Caco-2 (cell line): ENCODE measurements at regions of chr16 and their contacts with region 1.

Region 1: GRCh38 chr16:19086322-19087199 is 19.1 kb downstream of the COQ7 start:
- DNase-seq: peak; percentile 93 to 96
- H3K4me3 ChIP-seq: peak overlapping the region; percentile 41
- H3K4me3 Mint-ChIP-seq: peak overlapping the region; percentile 85
- H3K27ac Mint-ChIP-seq: peak overlapping the region; percentile 86
- H3K4me1 ChIP-seq: 0 out of 2 replicates have a peak, but pooled peaks cover 10% of the 10 kb centered on the region
- H3K4me1 Mint-ChIP-seq: no peaks in the 10 kb centered on the region
- H3K27me3 ChIP-seq: no peaks in the 10 kb centered on the region
- H3K27me3 Mint-ChIP-seq: no peaks in the 10 kb centered on the region
- CTCF ChIP-seq: peak; percentile 92 to 95

Region 2: DNA sequence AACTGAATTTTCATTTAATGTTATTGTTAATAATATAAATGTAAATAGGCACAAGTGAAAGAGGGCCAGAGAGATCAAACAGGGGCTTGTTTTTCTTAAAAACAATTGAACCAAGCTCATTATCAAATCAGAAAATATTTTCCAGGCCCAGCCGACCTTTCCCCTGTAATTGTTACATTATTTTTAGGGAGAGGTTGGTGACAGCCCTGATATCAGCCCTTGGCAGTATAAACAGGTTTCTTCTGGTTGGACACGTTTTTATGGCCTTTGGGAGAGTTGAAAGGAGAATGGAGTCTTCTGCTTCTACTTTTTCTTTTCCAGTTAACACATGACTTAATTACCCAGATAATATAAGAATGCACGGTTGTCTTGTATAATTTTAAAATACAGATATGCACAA is 59.1 kb before region 1 on chr16:
- CTCF ChIA-PET with region 1: no interaction called
- POLR2A ChIA-PET with region 1: no interaction called
- intact Hi-C with region 1: no loop called
- DNase-seq: no peak
- H3K4me3 ChIP-seq: no peak overlapping the region
- H3K4me3 Mint-ChIP-seq: no peak overlapping the region
- H3K27ac Mint-ChIP-seq: no peak overlapping the region
- H3K4me1 ChIP-seq: no peaks in the 10 kb centered on the region
- H3K4me1 Mint-ChIP-seq: no peaks in the 10 kb centered on the region
- H3K27me3 ChIP-seq: no peaks in the 10 kb centered on the region
- H3K27me3 Mint-ChIP-seq: no peaks in the 10 kb centered on the region
- CTCF ChIP-seq: no peak

Region 3: DNA sequence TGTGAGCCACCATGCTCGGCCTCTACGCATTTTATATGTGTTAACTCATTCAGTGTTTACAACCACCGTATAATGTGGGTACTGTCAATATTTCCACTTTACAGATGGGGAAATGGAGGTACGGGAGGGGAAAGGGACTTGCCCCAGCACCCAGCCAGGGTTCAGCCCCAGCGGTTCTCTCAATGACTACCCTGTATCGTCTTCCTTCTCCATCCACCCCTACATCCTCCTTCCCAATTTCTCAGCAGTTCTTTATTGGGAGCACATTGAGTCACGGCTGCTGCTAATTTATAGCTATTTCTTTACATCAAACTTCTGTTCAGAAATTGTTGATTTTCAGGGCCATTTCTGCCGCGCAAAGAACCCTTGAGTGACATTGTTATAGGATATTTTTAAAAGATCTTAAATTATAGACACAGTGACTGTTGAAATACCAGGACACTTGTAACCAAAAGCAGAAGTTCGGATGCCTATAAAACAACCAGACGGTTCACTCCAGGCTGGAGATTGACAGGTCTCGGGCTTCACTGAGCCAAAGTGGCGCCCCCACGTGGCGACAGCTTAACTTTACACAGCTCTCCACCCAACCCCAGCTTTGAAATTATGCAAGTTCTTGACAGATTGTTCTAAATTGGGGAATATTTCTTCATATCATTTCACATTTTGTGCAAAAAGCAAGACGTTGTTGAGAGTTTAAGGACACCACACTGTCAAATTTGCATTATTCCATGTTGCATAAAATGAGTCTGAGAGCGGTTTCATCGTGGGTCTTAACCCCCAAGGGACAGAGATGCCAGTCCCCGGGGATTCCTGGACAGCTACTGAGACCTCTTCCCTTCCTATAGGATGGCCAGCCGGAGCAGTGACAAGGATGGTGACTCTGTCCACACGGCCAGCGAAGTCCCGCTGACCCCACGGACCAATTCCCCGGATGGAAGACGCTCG is 93.3 kb after region 1 on chr16:
- CTCF ChIA-PET with region 1: interaction called, 9 read pairs
- POLR2A ChIA-PET with region 1: no interaction called
- intact Hi-C with region 1: loop called (anchors 1 kb)
- DNase-seq: peak; percentile 51 to 66
- H3K4me3 ChIP-seq: no peak overlapping the region
- H3K4me3 Mint-ChIP-seq: no peak overlapping the region
- H3K27ac Mint-ChIP-seq: no peak overlapping the region
- H3K4me1 ChIP-seq: no peaks in the 10 kb centered on the region
- H3K4me1 Mint-ChIP-seq: no peaks in the 10 kb centered on the region
- H3K27me3 ChIP-seq: no peaks in the 10 kb centered on the region
- H3K27me3 Mint-ChIP-seq: no peaks in the 10 kb centered on the region
- CTCF ChIP-seq: peak; percentile 61 to 72

Region 4: GRCh38 chr16:19196871-19197270 is 110.3 kb after region 1 on chr16:
- CTCF ChIA-PET with region 1: no interaction called
- POLR2A ChIA-PET with region 1: no interaction called
- intact Hi-C with region 1: no loop called
- DNase-seq: no peak
- H3K4me3 ChIP-seq: no peak overlapping the region
- H3K4me3 Mint-ChIP-seq: no peak overlapping the region
- H3K27ac Mint-ChIP-seq: no peak overlapping the region
- H3K4me1 ChIP-seq: no peaks in the 10 kb centered on the region
- H3K4me1 Mint-ChIP-seq: no peaks in the 10 kb centered on the region
- H3K27me3 ChIP-seq: no peaks in the 10 kb centered on the region
- H3K27me3 Mint-ChIP-seq: no peaks in the 10 kb centered on the region
- CTCF ChIP-seq: no peak

Region 5: DNA sequence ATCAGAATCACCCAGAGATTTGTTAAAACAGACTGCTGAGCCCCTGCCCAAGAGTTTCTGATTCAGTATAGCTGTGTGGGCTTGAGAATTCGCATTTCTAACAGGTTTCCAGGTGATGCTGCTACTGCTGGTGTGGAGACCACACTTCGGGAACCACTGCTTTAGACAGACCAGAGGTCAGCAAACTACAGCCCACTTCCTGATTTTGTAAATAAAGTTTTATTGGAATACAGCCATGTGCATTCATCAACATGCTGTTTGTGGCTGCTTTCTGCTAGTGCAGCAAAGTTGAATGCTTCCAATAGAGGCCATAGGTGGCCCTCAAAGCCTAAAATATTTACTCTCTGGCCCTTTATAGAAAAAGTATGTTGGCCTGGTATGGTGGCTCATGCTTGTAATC is 166.3 kb after region 1 on chr16:
- CTCF ChIA-PET with region 1: no interaction called
- POLR2A ChIA-PET with region 1: no interaction called
- intact Hi-C with region 1: no loop called
- DNase-seq: no peak
- H3K4me3 ChIP-seq: no peak overlapping the region
- H3K4me3 Mint-ChIP-seq: no peak overlapping the region
- H3K27ac Mint-ChIP-seq: no peak overlapping the region
- H3K4me1 ChIP-seq: no peaks in the 10 kb centered on the region
- H3K4me1 Mint-ChIP-seq: no peaks in the 10 kb centered on the region
- H3K27me3 ChIP-seq: no peaks in the 10 kb centered on the region
- H3K27me3 Mint-ChIP-seq: peaks cover 5% of the 10 kb centered on the region
- CTCF ChIP-seq: no peak

Region 6: GRCh38 chr16:19375561-19376158 is 289.1 kb after region 1 on chr16:
- CTCF ChIA-PET with region 1: interaction called, 8 read pairs
- POLR2A ChIA-PET with region 1: no interaction called
- intact Hi-C with region 1: loop called (anchors 1 kb)
- DNase-seq: peak; percentile 40 to 46
- H3K4me3 ChIP-seq: no peak overlapping the region
- H3K4me3 Mint-ChIP-seq: no peak overlapping the region
- H3K27ac Mint-ChIP-seq: no peak overlapping the region
- H3K4me1 ChIP-seq: peaks cover 4% of the 10 kb centered on the region; the same call in 1 of the 2 replicates
- H3K4me1 Mint-ChIP-seq: peaks cover 8% of the 10 kb centered on the region
- H3K27me3 ChIP-seq: no peaks in the 10 kb centered on the region
- H3K27me3 Mint-ChIP-seq: no peaks in the 10 kb centered on the region
- CTCF ChIP-seq: peak; percentile 78 to 83

Region 7: DNA sequence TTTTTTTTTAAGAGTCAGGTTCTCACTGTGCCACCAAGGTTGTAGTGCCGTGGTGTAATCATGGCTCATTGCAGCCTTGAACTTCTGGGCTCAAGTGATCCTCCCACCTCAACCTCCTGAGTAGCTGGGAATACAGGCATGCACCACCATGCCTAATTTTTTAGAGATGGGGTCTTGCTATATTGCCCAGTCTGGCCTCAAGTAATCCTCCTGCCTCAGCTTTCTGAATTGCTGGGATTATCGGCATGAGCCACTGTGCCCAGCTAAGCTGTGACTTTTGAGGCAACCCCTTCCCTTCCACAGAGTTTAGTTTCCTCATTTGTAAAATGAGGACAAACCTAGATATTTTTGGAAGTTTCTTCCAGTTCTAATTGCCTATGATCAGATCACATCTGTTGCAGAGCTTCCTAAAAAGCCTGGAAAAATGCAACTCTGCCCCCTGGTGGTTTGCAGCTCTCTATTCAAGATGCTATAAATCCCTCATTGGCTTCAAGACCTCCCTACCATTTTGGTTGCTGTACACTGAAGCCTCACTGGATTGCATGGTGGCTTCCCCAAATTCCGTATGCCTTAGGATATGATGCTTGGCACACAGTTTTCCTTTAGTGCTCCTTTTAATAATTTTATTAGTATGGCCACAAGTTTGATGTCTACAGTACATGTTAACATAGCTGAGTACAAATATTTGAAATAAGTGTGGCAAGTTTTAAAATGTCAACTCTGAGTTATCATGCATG is 416.0 kb after region 1 on chr16:
- CTCF ChIA-PET with region 1: interaction called, 3 read pairs
- POLR2A ChIA-PET with region 1: no interaction called
- intact Hi-C with region 1: loop called (anchors 1 kb)
- DNase-seq: peak; percentile 70 to 74
- H3K4me3 ChIP-seq: no peak overlapping the region
- H3K4me3 Mint-ChIP-seq: no peak overlapping the region
- H3K27ac Mint-ChIP-seq: no peak overlapping the region
- H3K4me1 ChIP-seq: 0 out of 2 replicates have a peak, but pooled peaks cover 4% of the 10 kb centered on the region
- H3K4me1 Mint-ChIP-seq: peaks cover 9% of the 10 kb centered on the region
- H3K27me3 ChIP-seq: no peaks in the 10 kb centered on the region
- H3K27me3 Mint-ChIP-seq: no peaks in the 10 kb centered on the region
- CTCF ChIP-seq: peak; percentile 69 to 72